ENCODE measurements at regions of chr1 and their contacts with region 1.

Region 1: GRCh38 chr1:3530926-3531818 is 76.7 kb downstream of the ARHGEF16 start:
- DNase-seq: peak; percentile 61
- ATAC-seq: peak; percentile 89
- H3K4me3 ChIP-seq: peak overlapping the region; percentile 57 to 70
- H3K27ac ChIP-seq: peak overlapping the region; percentile 81; the same call in 1 of the 2 replicates
- H3K4me1 ChIP-seq: peaks cover 13 to 22% of the 10 kb centered on the region in 2 experiments
- H3K27me3 ChIP-seq: no peaks in the 10 kb centered on the region
- CTCF ChIP-seq: no peak
- POLR2A ChIP-seq: no peak
- RAD21 ChIP-seq: no peak

Region 2: DNA sequence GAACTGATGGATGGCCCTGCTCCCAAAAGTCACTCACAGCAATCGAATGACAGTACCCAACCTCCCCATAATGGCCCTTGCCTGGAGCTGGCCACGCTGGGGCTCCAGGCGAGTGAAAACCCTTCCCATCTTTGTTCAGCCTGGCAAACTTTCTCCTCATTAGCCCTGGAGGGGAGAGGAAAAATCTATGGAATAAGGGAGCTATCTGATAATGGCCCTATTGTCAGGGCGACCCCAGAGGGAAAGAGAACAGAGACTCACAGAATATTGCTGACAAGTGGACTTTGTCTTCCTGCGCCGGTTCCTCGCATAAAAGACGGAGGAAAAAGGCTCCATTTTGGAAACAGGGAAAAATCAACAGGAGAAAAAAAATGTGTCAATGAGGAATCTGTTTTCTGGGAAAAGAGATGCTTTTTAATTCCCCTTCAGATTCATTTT is 89.7 kb before region 1 on chr1:
- CTCF ChIA-PET with region 1: no interaction called
- POLR2A ChIA-PET with region 1: no interaction called
- RAD21 ChIA-PET with region 1: no interaction called
- intact Hi-C with region 1: no loop called
- DNase-seq: no peak
- ATAC-seq: no peak
- H3K4me3 ChIP-seq: no peak overlapping the region
- H3K27ac ChIP-seq: no peak overlapping the region
- H3K4me1 ChIP-seq: no peaks in the 10 kb centered on the region
- H3K27me3 ChIP-seq: peaks cover 5% of the 10 kb centered on the region; the same call in 1 of the 2 replicates
- CTCF ChIP-seq: no peak
- POLR2A ChIP-seq: no peak
- RAD21 ChIP-seq: no peak

Region 3: DNA sequence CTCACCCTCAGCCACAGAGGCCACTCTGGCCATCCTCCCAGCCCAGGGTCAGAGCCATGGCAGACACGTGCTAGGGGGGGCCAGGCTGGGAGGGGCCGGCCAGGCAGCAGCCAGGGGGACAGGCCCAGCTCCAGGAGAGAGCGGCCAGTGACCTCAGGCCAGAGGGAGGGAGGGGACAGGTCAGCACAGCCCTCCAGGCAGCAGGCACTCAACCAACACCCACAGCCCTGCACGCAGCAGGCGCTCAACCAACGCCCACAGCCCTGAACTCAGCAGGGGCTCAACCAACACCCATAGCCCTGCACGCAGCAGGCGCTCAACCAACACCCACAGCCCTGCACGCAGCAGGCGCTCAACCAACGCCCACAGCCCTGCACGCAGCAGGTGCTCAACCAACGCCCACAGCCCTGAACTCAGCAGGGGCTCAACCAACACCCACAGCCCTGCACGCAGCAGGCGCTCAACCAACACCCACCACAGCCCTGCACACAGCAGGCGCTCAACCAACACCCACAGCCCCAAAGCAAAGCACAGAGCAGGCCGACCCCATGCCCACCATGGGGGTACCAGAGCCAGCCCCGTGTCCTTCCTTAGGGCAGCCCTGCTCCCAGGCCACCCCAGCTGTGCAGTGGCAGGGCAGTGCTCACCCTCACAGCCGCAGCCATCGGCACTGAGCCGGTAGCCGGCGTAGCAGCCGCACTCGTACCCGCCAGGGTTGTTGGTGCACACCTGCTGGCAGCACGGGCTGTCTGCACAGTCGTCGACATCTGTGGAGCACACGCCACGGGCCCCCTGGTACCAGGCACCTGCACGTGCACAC is 20.8 kb before region 1 on chr1:
- CTCF ChIA-PET with region 1: no interaction called
- POLR2A ChIA-PET with region 1: no interaction called
- RAD21 ChIA-PET with region 1: no interaction called
- intact Hi-C with region 1: loop called (anchors 2 kb)
- DNase-seq: peak; percentile 37
- ATAC-seq: peak; percentile 73
- H3K4me3 ChIP-seq: peak overlapping the region in 1 of 2 experiments; percentile 41; a peak in 2 of 4 replicates
- H3K27ac ChIP-seq: peak overlapping the region; percentile 50
- H3K4me1 ChIP-seq: peaks cover 15 to 55% of the 10 kb centered on the region in 2 experiments
- H3K27me3 ChIP-seq: no peaks in the 10 kb centered on the region
- CTCF ChIP-seq: no peak
- POLR2A ChIP-seq: no peak
- RAD21 ChIP-seq: no peak